Activated CD8-positive, alpha-beta T cell treated with anti-CD3 and anti-CD28 coated beads, Interleukin-2, amount 10 ng/mL, durations not matched to agents 7 days and 5 days (primary cell): ENCODE measurements at regions of chr19 and their contacts with region 1.

Region 1: GRCh38 chr19:40139533-40140287 is 49.0 kb upstream of the ZNF780A start:
- DNase-seq: peak; percentile 47
- ATAC-seq: no peak
- H3K4me3 Mint-ChIP-seq: no peak overlapping the region
- H3K27ac Mint-ChIP-seq: no peak overlapping the region
- H3K4me1 Mint-ChIP-seq: peaks cover 23% of the 10 kb centered on the region
- H3K27me3 Mint-ChIP-seq: peaks cover 14% of the 10 kb centered on the region

Region 2: GRCh38 chr19:40165362-40165937 is 25.7 kb after region 1 on chr19:
- CTCF ChIA-PET with region 1: interaction called, 32 read pairs
- POLR2A ChIA-PET with region 1: no interaction called
- DNase-seq: peak; percentile 77
- ATAC-seq: peak; percentile 69
- H3K4me3 Mint-ChIP-seq: no peak overlapping the region
- H3K27ac Mint-ChIP-seq: no peak overlapping the region
- H3K4me1 Mint-ChIP-seq: peaks cover 15% of the 10 kb centered on the region
- H3K27me3 Mint-ChIP-seq: no peaks in the 10 kb centered on the region